ENCODE measurements at regions of chr16 and their contacts with region 1.

Region 1: GRCh38 chr16:50266337-50267091 is at the start of gene ADCY7:
- DNase-seq: no peak
- ATAC-seq: peak; percentile 90
- H3K4me3 ChIP-seq: peak within 1 kb of the TSS; percentile 80
- H3K27ac ChIP-seq: peak within 1 kb of the TSS; percentile 87
- H3K4me1 ChIP-seq: peaks cover 34% of the 10 kb centered on the region
- H3K27me3 ChIP-seq: no peaks in the 10 kb centered on the region; a peak in 1 of 4 replicates
- CTCF ChIP-seq: no peak
- EP300 ChIP-seq: no peak
- POLR2A ChIP-seq: peak; percentile 93
- RAD21 ChIP-seq: no peak
- polyA plus RNA-seq, gene ADCY7: 1.2 to 1.3 TPM

Region 2: DNA sequence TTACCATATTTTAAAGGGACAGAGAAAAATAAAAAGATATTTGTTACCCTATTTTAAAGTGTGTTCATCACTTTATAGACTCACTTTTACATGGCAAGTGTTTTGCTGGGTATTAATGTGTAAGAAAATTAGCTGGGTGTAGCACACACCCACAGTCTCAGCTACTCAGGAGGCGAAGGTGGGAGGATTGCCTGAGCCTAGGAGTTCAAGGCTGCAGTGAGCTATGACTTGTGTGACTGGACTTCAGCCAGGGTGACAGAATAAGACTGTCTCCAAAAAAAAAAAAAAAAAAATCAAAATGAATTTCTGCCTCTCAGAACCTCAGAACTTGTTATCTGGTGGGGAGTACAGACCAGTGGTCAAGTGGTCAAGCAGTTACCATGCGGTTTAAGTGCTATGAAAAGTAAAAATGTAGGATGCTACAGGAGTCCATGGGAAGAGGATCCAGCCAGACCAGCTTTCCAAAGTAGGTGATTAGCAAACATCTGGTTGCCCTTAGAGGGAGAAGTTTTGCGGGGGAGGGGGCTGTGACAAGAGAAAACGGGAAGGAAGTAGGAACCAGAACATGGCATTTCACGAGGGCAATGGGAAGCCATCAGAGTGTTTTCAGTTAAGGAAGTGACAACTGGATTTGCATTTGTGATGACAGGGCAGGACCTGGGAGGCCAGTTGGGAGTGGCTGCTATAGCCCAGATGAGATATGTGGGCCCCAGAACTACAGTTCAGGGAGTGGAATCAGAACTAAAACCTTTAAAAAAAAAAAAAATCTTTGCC is 227.6 kb before region 1 on chr16:
- CTCF ChIA-PET with region 1: no interaction called
- POLR2A ChIA-PET with region 1: no interaction called
- RAD21 ChIA-PET with region 1: no interaction called
- SMC1A ChIA-PET with region 1: no interaction called
- in situ Hi-C with region 1: no loop called
- intact Hi-C with region 1: no loop called
- DNase-seq: no peak
- ATAC-seq: peak; percentile 46; the same call in 1 of the 3 replicates
- H3K4me3 ChIP-seq: no peak overlapping the region
- H3K27ac ChIP-seq: no peak overlapping the region
- H3K4me1 ChIP-seq: peaks cover 11% of the 10 kb centered on the region
- H3K27me3 ChIP-seq: no peaks in the 10 kb centered on the region
- CTCF ChIP-seq: no peak
- EP300 ChIP-seq: no peak
- POLR2A ChIP-seq: no peak
- RAD21 ChIP-seq: no peak

Region 3: GRCh38 chr16:50195276-50195675 is 71.2 kb before region 1 on chr16:
- CTCF ChIA-PET with region 1: interaction called, 3 read pairs
- POLR2A ChIA-PET with region 1: no interaction called
- RAD21 ChIA-PET with region 1: no interaction called
- SMC1A ChIA-PET with region 1: no interaction called
- in situ Hi-C with region 1: no loop called
- intact Hi-C with region 1: loop called (anchors 2 kb)
- DNase-seq: no peak
- ATAC-seq: peak; percentile 12
- H3K4me3 ChIP-seq: peak overlapping the region; percentile 43; the same call in 1 of the 2 replicates
- H3K27ac ChIP-seq: peak overlapping the region; percentile 75
- H3K4me1 ChIP-seq: peaks cover 42% of the 10 kb centered on the region
- H3K27me3 ChIP-seq: no peaks in the 10 kb centered on the region
- CTCF ChIP-seq: no peak
- EP300 ChIP-seq: no peak
- POLR2A ChIP-seq: no peak
- RAD21 ChIP-seq: no peak

Region 4: GRCh38 chr16:50234771-50235556 is 31.6 kb before region 1 on chr16:
- CTCF ChIA-PET with region 1: no interaction called
- POLR2A ChIA-PET with region 1: no interaction called
- RAD21 ChIA-PET with region 1: no interaction called
- SMC1A ChIA-PET with region 1: no interaction called
- in situ Hi-C with region 1: no loop called
- intact Hi-C with region 1: no loop called
- DNase-seq: no peak
- ATAC-seq: no peak
- H3K4me3 ChIP-seq: no peak overlapping the region
- H3K27ac ChIP-seq: no peak overlapping the region
- H3K4me1 ChIP-seq: no peaks in the 10 kb centered on the region
- H3K27me3 ChIP-seq: no peaks in the 10 kb centered on the region
- CTCF ChIP-seq: no peak
- EP300 ChIP-seq: no peak
- POLR2A ChIP-seq: no peak
- RAD21 ChIP-seq: no peak

Region 5: GRCh38 chr16:50281964-50282538 is 15.5 kb after region 1 on chr16:
- CTCF ChIA-PET with region 1: interaction called, 44 read pairs
- POLR2A ChIA-PET with region 1: interaction called, 13 read pairs
- RAD21 ChIA-PET with region 1: interaction called, 5 read pairs
- SMC1A ChIA-PET with region 1: interaction called, 73 read pairs
- in situ Hi-C with region 1: no loop called
- intact Hi-C with region 1: no loop called
- DNase-seq: peak; percentile 86
- ATAC-seq: peak; percentile 91
- H3K4me3 ChIP-seq: peak overlapping the region; percentile 59; the same call in 1 of the 2 replicates
- H3K27ac ChIP-seq: peak overlapping the region; percentile 85
- H3K4me1 ChIP-seq: peaks cover 68% of the 10 kb centered on the region
- H3K27me3 ChIP-seq: no peaks in the 10 kb centered on the region
- CTCF ChIP-seq: no peak
- EP300 ChIP-seq: peak; percentile 86 to 94
- POLR2A ChIP-seq: no peak
- RAD21 ChIP-seq: peak; percentile 28; the same call in 1 of the 2 replicates